Panc1 (cell line): ENCODE measurements at regions of chr17 and their contacts with region 1.

Region 1: DNA sequence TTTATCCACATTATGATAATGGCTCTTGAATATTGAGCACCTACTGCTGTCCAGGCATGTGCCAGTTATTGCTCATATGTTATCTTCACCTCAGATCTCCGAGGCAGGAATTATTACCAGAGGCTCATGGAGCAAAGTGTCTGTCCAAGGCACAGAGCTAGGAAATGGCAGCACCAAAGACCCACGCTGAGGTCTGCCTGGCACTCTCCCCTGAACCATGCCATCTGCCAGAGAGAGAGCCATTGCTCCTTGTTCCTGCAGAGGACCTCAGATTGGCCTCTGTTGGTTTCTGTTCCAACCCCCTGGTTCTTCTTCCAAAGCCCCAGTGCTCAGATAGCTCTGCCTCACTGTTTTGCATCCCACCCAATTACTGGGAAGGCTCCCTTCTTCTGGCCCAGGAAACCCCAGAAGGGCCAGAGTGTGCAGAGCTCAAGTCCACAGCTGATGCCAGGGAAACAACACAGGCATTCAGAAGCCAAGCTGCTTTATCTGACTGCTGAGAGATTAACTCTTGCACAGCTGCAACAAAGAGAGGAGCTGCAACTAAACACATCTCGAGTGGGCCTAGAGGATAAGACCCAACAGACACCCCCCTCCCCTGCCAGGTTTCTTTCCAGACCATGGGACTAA is 5.9 kb downstream of the ASIC2 start:
- DNase-seq: no peak
- ATAC-seq: no peak
- H3K4me3 ChIP-seq: no peak overlapping the region
- H3K27ac ChIP-seq: peak overlapping the region; percentile 45
- H3K4me1 ChIP-seq: peaks cover 79% of the 10 kb centered on the region
- H3K27me3 ChIP-seq: no peaks in the 10 kb centered on the region
- CTCF ChIP-seq: no peak

Region 2: DNA sequence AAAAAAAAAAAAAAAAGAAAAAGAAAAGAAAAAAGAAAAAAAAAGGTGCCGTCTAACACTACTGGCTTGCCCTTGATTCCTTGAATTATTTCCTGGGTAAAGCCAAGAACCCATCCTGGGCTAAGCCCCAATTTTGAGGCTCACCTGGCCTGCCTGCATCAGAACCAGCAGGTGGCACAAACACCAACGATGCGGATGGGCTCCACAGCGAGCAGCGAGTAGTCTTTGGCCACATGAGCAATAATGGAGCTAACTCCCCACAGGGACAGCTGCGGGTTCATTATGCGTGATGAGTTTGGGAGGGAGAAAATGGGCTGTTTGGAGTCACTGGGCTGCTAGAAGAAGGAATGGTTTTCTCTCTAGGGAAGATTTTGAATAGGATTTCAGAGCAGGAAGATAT is 85.2 kb before region 1 on chr17:
- CTCF ChIA-PET with region 1: no interaction called
- POLR2A ChIA-PET with region 1: no interaction called
- in situ Hi-C with region 1: no loop called
- intact Hi-C with region 1: no loop called
- DNase-seq: no peak
- ATAC-seq: no peak
- H3K4me3 ChIP-seq: no peak overlapping the region
- H3K27ac ChIP-seq: no peak overlapping the region
- H3K4me1 ChIP-seq: no peaks in the 10 kb centered on the region
- H3K27me3 ChIP-seq: no peaks in the 10 kb centered on the region
- CTCF ChIP-seq: no peak

Region 3: GRCh38 chr17:33266116-33266515 is 21.1 kb before region 1 on chr17:
- CTCF ChIA-PET with region 1: no interaction called
- POLR2A ChIA-PET with region 1: interaction called, 12 read pairs
- in situ Hi-C with region 1: no loop called
- intact Hi-C with region 1: no loop called
- DNase-seq: no peak
- ATAC-seq: no peak
- H3K4me3 ChIP-seq: no peak overlapping the region
- H3K27ac ChIP-seq: peak overlapping the region; percentile 25; the same call in 1 of the 2 replicates
- H3K4me1 ChIP-seq: peaks cover 8% of the 10 kb centered on the region; the same call in 1 of the 2 replicates
- H3K27me3 ChIP-seq: no peaks in the 10 kb centered on the region
- CTCF ChIP-seq: no peak

Region 4: DNA sequence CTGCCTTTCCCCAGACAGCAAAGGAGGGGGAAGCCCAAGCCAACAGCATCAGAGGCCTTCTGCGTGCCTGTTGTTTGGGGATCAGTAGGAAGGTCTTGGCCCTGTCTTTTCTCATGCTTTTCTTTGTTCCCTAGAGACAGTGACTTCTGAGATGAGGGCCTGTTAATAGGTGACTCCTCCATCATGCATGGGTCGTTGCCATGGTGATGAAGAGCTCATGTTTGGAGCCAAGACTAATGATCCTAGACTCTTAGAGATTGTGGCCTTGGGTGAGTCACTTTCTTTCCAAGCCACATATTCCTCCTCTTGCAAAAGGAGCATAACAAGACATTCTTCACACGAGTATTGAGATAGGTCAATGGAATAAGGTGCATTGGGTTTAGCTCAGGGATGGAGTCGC is 206.9 kb after region 1 on chr17:
- CTCF ChIA-PET with region 1: no interaction called
- POLR2A ChIA-PET with region 1: no interaction called
- in situ Hi-C with region 1: no loop called
- intact Hi-C with region 1: no loop called
- DNase-seq: no peak
- ATAC-seq: no peak
- H3K4me3 ChIP-seq: no peak overlapping the region
- H3K27ac ChIP-seq: no peak overlapping the region
- H3K4me1 ChIP-seq: no peaks in the 10 kb centered on the region
- H3K27me3 ChIP-seq: peaks cover 3% of the 10 kb centered on the region
- CTCF ChIP-seq: no peak

Region 5: GRCh38 chr17:34133350-34133749 is 846.1 kb after region 1 on chr17:
- CTCF ChIA-PET with region 1: no interaction called
- POLR2A ChIA-PET with region 1: no interaction called
- in situ Hi-C with region 1: no loop called
- intact Hi-C with region 1: no loop called
- DNase-seq: no peak
- ATAC-seq: no peak
- H3K4me3 ChIP-seq: no peak overlapping the region
- H3K27ac ChIP-seq: no peak overlapping the region
- H3K4me1 ChIP-seq: no peaks in the 10 kb centered on the region
- H3K27me3 ChIP-seq: peaks cover 18% of the 10 kb centered on the region
- CTCF ChIP-seq: no peak